ENCODE measurements at regions of chr15 and their contacts with region 1.

Region 1: DNA sequence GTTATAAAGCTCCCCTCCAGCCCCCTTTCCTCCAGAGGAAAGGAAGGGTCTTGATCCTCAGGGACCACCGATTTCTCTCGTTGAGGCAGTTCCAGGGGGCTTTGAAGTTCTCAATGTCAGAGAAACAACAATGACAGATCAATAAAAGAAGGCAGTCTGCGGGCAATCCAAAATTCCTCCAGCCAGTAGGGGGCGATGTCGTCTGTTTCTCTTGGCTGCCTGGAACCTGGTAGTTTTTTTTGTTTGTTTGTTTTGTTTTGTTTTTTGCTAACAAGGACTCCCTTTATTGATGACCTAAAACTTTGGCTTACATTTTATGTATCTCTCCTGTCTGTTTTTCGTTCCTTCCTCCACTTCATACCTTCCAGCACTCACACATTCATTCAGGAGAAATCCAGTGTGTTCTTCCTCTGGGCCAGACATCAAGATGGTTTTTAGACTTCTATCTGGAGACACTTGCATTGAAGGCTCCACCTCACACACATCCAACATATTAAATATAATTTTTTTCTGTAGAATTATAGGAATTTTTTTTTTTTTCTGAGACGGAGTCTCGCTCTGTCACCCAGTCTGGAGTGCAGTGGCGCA is 276.6 kb downstream of the RPLP1 start:
- DNase-seq: peak; percentile 56
- H3K4me3 ChIP-seq: no peak overlapping the region
- H3K27ac ChIP-seq: no peak overlapping the region
- H3K4me1 ChIP-seq: no peaks in the 10 kb centered on the region
- CTCF ChIP-seq: peak; percentile 99

Region 2: DNA sequence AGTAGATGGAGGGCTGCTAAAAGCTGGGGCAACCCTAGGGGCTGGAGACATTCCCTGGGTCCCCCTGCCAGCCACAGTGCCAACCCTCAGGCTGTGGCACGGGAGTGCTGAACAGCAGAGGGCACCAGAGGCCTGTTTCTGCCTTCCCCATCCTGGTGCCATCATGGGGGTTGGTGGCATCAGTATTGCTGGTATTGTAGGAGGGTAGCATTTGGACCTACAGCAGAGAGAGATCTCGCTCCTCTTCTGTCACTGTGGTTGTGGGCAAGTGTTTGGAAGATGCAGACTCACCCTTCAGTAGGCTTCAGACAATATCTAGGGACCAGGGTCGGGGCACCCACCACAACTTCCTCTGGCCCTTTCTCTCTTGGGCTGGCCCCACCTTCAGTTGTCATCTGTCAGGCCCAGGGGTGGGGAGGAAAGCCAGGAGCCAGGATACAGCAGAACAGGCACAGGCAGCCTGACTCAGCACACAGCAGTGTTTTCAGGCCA is 153.2 kb before region 1 on chr15:
- CTCF ChIA-PET with region 1: no interaction called
- POLR2A ChIA-PET with region 1: no interaction called
- intact Hi-C with region 1: loop called (anchors 10 kb)
- DNase-seq: peak; percentile 43
- H3K4me3 ChIP-seq: no peak overlapping the region
- H3K27ac ChIP-seq: no peak overlapping the region
- H3K4me1 ChIP-seq: no peaks in the 10 kb centered on the region
- CTCF ChIP-seq: peak; percentile 81

Region 3: DNA sequence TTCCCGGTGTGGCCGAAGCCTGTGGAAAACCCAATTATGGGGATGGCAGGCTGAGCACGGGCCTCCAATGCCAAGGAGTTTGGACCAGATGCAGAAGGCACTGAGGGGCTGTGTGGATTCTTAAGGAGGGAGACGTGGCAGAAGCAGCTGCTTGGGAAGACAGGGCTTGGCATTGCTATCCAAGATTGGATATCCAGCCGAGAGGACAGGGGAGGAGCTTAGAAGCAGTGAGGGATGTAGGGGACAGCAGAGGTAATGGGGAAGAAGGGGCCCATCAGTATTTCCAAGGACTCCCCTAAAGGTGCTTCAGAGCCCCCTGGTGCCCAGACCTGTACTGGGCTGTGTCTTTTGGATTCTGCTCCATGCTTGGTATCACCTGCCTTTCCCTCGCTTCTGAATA is 481.3 kb after region 1 on chr15:
- CTCF ChIA-PET with region 1: no interaction called
- POLR2A ChIA-PET with region 1: no interaction called
- intact Hi-C with region 1: loop called (anchors 10 kb)
- DNase-seq: peak; percentile 10
- H3K4me3 ChIP-seq: no peak overlapping the region
- H3K27ac ChIP-seq: no peak overlapping the region
- H3K4me1 ChIP-seq: no peaks in the 10 kb centered on the region
- CTCF ChIP-seq: peak; percentile 58

Measured in OCI-LY7 (cell line).